Left colon (tissue), 2 donors: ENCODE measurements at regions of chr21 and their contacts with region 1.

Region 1: DNA sequence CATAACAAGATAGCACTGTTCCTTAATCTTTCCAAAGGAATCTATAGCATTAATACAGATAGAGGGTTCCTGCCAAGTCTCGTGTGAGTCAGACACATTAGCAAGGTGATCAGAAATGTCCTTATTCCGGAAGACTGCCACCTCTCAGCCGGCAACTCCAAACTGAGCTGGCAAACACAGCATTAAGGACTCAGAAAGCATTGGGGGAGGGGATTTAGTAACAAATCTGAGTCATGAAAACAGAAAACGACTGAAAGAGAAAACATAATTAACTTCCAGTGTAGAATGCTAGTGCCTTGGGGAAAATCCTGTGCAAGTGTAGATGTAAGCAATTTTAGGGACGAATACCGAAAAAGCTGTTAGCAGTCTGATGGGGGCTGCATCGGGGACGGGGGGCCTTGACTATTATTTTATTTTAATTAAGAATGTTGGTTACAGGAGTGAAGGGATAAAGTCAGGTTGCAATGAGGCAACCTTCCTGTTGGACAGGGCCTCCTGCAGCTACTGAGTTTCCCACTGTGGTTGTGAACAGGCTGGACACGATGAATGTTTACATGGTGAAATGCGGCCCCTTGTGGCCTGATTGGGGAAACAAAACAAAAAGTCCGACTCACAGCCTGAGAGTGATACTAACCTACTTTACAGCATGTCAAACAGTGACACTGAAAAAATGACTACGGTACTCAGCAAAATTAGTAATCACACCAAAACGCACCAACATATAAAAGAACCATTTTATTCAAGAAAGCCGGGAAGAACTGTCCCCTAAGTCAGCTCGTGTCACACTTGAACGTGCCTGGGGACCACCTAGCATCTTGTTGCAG is 20.7 kb downstream of the MIS18A start:
- DNase-seq: peak; percentile 48 to 65
- ATAC-seq: peak; percentile 98

Region 2: DNA sequence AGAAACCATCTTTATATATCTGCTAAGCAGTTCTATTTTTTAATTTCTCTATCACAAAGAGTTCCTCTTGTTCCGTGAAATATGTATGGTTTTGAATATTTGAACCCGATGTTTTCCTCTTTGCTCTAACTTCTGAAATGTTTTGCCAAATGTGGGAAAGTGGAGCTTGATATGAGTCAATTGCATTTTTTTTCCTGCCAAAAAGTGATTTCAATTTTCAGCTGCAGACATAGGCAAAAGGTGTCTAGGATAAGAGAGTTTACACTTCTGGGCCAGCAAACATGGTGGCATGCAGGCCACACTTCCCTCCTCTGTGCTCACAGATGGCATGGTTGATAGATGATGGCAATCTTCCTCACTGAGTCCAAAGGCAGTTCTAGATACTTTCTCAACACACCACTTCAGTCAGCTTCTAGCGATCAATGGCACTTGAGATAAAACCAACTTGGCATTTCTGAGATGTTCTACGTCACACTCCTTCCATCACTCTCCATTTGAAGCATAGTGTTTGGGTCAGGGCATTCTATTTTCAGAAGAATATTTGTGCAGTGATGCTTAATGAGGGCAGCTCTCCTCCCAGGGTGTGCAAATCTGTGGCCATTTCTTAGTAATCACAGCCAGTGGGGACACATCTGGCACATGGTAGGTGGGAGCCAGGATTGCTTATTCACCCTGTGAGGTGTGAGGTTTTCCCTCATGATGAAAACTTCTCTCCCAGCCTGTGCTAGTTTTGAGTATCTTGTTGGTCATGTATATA is 471.8 kb before region 1 on chr21:
- intact Hi-C with region 1: loop called in 1 of 2 experiments (anchors 5 kb)
- DNase-seq: no peak
- ATAC-seq: no peak

Region 3: GRCh38 chr21:31866077-31866511 is 392.1 kb before region 1 on chr21:
- intact Hi-C with region 1: loop called (anchors 5 to 10 kb)
- DNase-seq: peak; percentile 80 to 94
- ATAC-seq: peak; percentile 98